IMR-90 (cell line): ENCODE measurements at regions of chr1 and their contacts with region 1.

Region 1: GRCh38 chr1:33181921-33182341 is at the start of gene TRIM62:
- DNase-seq: peak; percentile 85
- ATAC-seq: peak; percentile 83
- H3K4me3 ChIP-seq: peak within 1 kb of the TSS; percentile 93
- H3K27ac ChIP-seq: peak within 1 kb of the TSS; percentile 58
- H3K4me1 ChIP-seq: peaks cover 5% of the 10 kb centered on the region
- H3K27me3 ChIP-seq: no peaks in the 10 kb centered on the region
- CTCF ChIP-seq: no peak
- POLR2A ChIP-seq: no peak
- RAD21 ChIP-seq: no peak
- total RNA-seq, gene TRIM62: 2.8 and 3.0 TPM in 2 replicates

Region 2: DNA sequence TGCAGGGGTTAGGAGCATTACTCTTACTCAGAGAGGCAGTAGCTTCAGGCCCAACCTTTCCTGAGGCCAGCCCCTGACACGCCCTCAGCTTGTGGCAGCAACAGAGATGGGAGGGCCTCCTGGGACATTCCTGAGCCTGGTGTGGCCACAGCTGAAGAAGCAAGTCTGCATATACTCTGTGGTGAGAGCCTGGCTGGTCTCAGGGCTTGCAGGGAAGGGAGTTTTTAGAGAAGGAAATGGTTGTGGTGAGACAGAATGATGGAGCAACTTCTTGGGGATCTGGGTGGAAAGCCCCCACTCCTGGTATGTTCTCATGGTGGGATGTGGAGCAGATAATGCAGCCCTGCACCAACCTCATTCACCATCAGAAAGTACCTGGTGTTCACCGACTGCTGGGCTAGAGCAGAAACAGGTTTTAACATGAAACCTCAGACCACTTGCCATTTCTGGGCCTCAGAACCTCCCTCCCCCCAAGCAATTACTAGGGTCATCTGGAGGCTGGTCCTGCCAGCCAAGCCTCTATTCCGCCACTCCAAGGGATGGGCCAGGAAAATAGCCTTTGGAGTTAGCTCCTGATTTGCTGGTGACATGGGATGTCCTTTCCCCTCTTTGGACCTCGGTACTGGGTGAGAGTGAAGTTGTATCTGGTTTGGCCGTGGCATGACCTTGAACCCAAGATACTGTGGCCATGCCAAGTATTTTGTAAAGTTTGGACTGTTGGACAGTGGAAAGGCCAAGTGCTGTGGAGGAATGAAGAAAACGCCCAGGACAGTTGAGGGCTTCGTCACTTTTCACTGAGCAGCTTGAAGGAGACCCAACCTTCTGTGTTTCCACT is 189.2 kb before region 1 on chr1:
- CTCF ChIA-PET with region 1: no interaction called
- POLR2A ChIA-PET with region 1: no interaction called
- dilution Hi-C with region 1: no loop called
- in situ Hi-C with region 1: no loop called
- intact Hi-C with region 1: no loop called
- DNase-seq: peak; percentile 95
- ATAC-seq: peak; percentile 91
- H3K4me3 ChIP-seq: no peak overlapping the region
- H3K27ac ChIP-seq: peak overlapping the region; percentile 3; the same call in 1 of the 2 replicates
- H3K4me1 ChIP-seq: peaks cover 28% of the 10 kb centered on the region
- H3K27me3 ChIP-seq: no peaks in the 10 kb centered on the region
- CTCF ChIP-seq: no peak
- POLR2A ChIP-seq: no peak
- RAD21 ChIP-seq: no peak

Region 3: GRCh38 chr1:33256701-33257399 is 74.9 kb after region 1 on chr1:
- CTCF ChIA-PET with region 1: no interaction called
- POLR2A ChIA-PET with region 1: no interaction called
- dilution Hi-C with region 1: no loop called
- in situ Hi-C with region 1: no loop called
- intact Hi-C with region 1: loop called (anchors 1 kb)
- DNase-seq: peak; percentile 83
- ATAC-seq: peak; percentile 69
- H3K4me3 ChIP-seq: peak overlapping the region; percentile 59
- H3K27ac ChIP-seq: peak overlapping the region; percentile 86
- H3K4me1 ChIP-seq: peaks cover 15% of the 10 kb centered on the region
- H3K27me3 ChIP-seq: no peaks in the 10 kb centered on the region; the same call in 1 of the 2 replicates
- CTCF ChIP-seq: no peak
- POLR2A ChIP-seq: no peak
- RAD21 ChIP-seq: no peak